Activated CD8-positive, alpha-beta T cell treated with anti-CD3 and anti-CD28 coated beads for 36 hours (primary cell): ENCODE measurements at regions of chr5 and their contacts with region 1.

Region 1: DNA sequence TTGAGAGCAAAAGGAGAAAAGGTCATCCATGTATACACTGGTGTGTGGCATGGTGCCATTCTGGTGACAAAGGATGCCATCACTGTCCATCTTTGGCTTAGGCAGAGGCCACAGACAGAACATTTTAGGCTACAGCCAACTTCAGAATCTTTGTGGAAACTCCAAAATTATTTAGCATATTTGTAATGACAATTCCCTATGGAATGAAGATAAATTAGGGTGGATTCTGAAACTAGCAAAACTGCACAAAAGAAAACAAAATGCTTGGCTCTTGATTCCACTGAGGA is 92.5 kb downstream of the FBXW11 start:
- DNase-seq: no peak
- ATAC-seq: no peak
- H3K4me3 Mint-ChIP-seq: no peak overlapping the region
- H3K27ac Mint-ChIP-seq: peak overlapping the region; percentile 75
- H3K4me1 Mint-ChIP-seq: peaks cover 52% of the 10 kb centered on the region
- H3K27me3 Mint-ChIP-seq: no peaks in the 10 kb centered on the region
- CTCF ChIP-seq: no peak

Region 2: DNA sequence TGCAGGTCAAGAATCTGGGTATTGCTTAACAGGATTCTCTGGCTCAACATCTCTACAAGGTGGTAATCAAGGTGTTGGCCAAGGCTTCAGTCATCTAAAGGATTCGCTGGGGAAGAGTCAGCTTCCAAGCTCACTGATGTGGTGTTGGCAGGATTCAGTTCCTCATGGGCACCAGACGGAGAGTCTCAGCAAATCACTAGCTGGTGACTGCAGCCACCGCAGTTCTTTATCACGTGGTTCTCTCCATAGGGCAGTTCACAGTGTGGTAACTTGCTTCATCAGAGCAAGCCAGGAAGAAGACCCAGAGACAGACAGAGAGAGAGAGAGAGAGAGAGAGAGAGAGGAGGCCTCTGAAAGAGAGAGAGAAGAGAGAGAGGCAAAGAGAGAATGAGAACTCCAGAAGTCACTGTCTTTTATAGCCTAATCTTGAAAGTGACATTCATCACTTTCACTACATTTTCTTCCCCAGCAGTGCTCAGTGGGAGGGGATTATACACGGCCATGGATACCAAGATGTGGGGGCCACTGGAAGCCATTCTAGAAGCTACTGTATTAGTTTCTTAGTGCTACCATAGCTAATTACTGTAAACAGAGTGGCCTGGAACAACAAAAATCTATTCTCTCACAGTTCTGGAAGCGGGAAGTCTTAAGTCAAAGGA is 237.5 kb before region 1 on chr5:
- CTCF ChIA-PET with region 1: no interaction called
- POLR2A ChIA-PET with region 1: no interaction called
- intact Hi-C with region 1: no loop called
- DNase-seq: no peak
- ATAC-seq: no peak
- H3K4me3 Mint-ChIP-seq: no peak overlapping the region
- H3K27ac Mint-ChIP-seq: no peak overlapping the region
- H3K4me1 Mint-ChIP-seq: peaks cover 6% of the 10 kb centered on the region
- H3K27me3 Mint-ChIP-seq: peaks cover 8% of the 10 kb centered on the region
- CTCF ChIP-seq: no peak

Region 3: GRCh38 chr5:171953860-171954701 is 40.2 kb after region 1 on chr5:
- CTCF ChIA-PET with region 1: interaction called, 15 read pairs
- POLR2A ChIA-PET with region 1: interaction called, 6 read pairs
- intact Hi-C with region 1: loop called (anchors 5 kb)
- DNase-seq: no peak
- ATAC-seq: no peak
- H3K4me3 Mint-ChIP-seq: no peak overlapping the region
- H3K27ac Mint-ChIP-seq: no peak overlapping the region
- H3K4me1 Mint-ChIP-seq: peaks cover 69% of the 10 kb centered on the region
- H3K27me3 Mint-ChIP-seq: no peaks in the 10 kb centered on the region
- CTCF ChIP-seq: no peak

Region 4: DNA sequence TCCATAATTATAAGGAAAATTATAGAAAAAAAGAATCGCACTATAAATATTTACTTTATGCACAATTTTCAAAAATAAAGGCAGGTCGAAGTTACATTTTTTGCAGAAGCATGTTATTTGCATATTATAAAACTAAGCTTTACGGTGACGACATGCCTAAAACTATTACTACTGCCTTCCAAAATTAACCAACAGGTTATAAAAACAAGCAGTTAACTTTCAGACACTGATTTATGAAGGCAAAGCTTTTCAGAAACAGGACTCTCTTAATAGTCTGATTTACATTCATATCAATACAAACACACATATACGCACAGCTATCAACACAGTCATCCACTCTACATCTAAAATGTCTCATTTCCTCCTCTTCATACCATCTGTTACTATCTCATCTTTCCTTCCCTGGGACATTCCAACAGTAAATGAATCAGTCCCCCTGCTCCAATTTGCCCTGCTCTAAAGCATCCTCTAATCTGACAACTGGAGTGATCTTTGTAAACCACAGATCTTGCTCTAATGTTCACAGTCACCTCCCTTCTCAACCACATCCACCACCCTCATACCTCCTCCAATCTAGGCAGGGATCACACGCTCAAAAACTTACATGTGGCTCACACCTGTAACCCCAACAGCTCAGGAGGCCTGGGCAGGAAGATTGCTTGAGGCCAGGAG is 71.0 kb after region 1 on chr5:
- CTCF ChIA-PET with region 1: interaction called, 12 read pairs
- POLR2A ChIA-PET with region 1: interaction called, 4 read pairs
- intact Hi-C with region 1: no loop called
- DNase-seq: peak; percentile 67
- ATAC-seq: peak; percentile 85
- H3K4me3 Mint-ChIP-seq: no peak overlapping the region
- H3K27ac Mint-ChIP-seq: peak overlapping the region; percentile 63
- H3K4me1 Mint-ChIP-seq: peaks cover 52% of the 10 kb centered on the region
- H3K27me3 Mint-ChIP-seq: no peaks in the 10 kb centered on the region
- CTCF ChIP-seq: no peak

Region 5: GRCh38 chr5:172035039-172035438 is 121.1 kb after region 1 on chr5:
- CTCF ChIA-PET with region 1: interaction called, 84 read pairs
- POLR2A ChIA-PET with region 1: no interaction called
- intact Hi-C with region 1: loop called (anchors 1 kb)
- DNase-seq: peak; percentile 30
- ATAC-seq: peak; percentile 82
- H3K4me3 Mint-ChIP-seq: no peak overlapping the region
- H3K27ac Mint-ChIP-seq: no peak overlapping the region
- H3K4me1 Mint-ChIP-seq: peaks cover 19% of the 10 kb centered on the region
- H3K27me3 Mint-ChIP-seq: no peaks in the 10 kb centered on the region
- CTCF ChIP-seq: no peak

Region 6: GRCh38 chr5:172059661-172060100 is 145.8 kb after region 1 on chr5:
- CTCF ChIA-PET with region 1: interaction called, 42 read pairs
- POLR2A ChIA-PET with region 1: no interaction called
- intact Hi-C with region 1: no loop called
- DNase-seq: no peak
- ATAC-seq: peak; percentile 53
- H3K4me3 Mint-ChIP-seq: no peak overlapping the region
- H3K27ac Mint-ChIP-seq: no peak overlapping the region
- H3K4me1 Mint-ChIP-seq: peaks cover 9% of the 10 kb centered on the region
- H3K27me3 Mint-ChIP-seq: no peaks in the 10 kb centered on the region
- CTCF ChIP-seq: peak; percentile 60

Region 7: DNA sequence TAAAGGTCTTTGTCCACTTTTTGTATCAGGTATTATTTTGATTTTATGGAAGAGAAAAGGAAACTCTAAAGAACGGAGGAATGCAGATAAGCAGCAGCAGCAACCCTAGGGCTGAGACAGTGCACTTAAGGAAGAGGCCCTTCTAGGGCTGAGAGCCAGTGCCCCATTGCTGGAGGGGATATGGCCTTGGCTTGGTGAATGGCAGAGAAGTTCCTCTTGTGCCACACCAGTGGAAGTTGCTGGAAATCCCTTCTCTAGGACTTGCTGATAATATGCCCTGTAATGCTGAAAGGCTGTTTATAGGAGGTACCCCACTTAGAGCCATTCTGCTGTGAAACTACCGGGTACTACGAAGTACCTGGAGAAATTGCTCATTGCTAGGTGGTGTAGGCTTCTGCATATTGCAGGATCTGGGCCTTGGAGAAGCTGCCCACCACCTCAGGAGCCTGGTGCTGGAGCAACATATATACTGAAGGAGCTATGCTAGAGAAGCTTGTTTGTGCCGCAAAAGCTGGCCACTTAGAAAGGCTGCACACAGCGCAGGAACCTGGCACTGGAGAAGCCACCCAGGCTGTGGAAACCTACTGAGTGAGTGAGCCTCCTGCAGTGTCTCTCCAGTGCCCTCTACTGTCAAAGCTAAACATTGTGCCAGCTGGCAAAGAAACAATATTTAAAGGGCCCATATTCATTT is 379.3 kb after region 1 on chr5:
- CTCF ChIA-PET with region 1: interaction called, 4 read pairs
- POLR2A ChIA-PET with region 1: no interaction called
- intact Hi-C with region 1: loop called (anchors 10 kb)
- DNase-seq: peak; percentile 76
- ATAC-seq: peak; percentile 100
- H3K4me3 Mint-ChIP-seq: no peak overlapping the region
- H3K27ac Mint-ChIP-seq: no peak overlapping the region
- H3K4me1 Mint-ChIP-seq: no peaks in the 10 kb centered on the region
- H3K27me3 Mint-ChIP-seq: peaks cover 6% of the 10 kb centered on the region
- CTCF ChIP-seq: peak; percentile 84